AG04450 (cell line): ENCODE measurements at regions of chr17 and their contacts with region 1.

Region 1: GRCh38 chr17:51056813-51057510 is 63.7 kb downstream of the SPAG9 start:
- DNase-seq: peak; percentile 61
- H3K4me3 ChIP-seq: no peak overlapping the region
- H3K27ac ChIP-seq: peak overlapping the region; percentile 80
- H3K27me3 ChIP-seq: no peaks in the 10 kb centered on the region
- CTCF ChIP-seq: peak; percentile 70

Region 2: GRCh38 chr17:50440172-50440837 is 616.7 kb before region 1 on chr17:
- CTCF ChIA-PET with region 1: no interaction called
- POLR2A ChIA-PET with region 1: no interaction called
- DNase-seq: no peak
- H3K4me3 ChIP-seq: no peak overlapping the region
- H3K27ac ChIP-seq: no peak overlapping the region
- H3K27me3 ChIP-seq: no peaks in the 10 kb centered on the region
- CTCF ChIP-seq: no peak

Region 3: DNA sequence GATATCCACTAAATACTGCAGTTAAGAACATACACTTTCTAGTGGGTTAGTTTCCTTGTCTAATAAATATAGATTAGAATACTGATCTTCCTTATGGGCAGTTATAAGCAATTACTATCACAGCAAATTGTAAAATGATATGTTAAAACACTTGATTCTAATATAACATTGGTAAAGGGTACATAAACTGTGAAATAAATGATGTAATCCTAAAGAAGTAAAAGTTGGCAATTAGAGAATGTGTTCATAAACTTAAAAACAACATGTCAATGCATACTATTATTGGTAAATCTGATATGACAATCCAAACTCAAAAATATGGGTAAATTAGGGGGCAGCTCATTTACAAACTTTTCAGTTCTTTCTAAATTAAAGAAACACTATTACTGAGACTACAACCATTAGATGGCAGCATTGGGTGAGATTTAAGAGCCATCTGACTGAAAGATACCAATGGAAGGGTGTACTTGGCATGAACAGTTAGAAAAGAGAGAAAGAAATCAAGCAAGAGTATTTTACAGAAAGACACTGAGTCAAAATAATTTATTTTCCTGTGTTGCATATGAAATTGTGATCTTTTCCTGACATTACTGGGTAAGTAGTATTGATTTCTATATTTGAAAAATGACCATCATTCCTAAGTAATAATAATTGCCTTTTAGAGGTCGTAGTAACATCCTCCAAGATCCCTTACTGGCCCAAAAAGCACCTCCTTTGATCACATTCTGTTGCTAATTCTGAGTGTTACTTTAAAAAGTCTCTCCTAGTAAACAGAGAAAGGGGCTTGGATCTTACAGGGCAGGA is 55.9 kb before region 1 on chr17:
- CTCF ChIA-PET with region 1: interaction called, 119 read pairs
- POLR2A ChIA-PET with region 1: no interaction called
- DNase-seq: peak; percentile 45
- H3K4me3 ChIP-seq: no peak overlapping the region
- H3K27ac ChIP-seq: no peak overlapping the region
- H3K27me3 ChIP-seq: no peaks in the 10 kb centered on the region
- CTCF ChIP-seq: peak; percentile 54

Region 4: GRCh38 chr17:51006601-51007000 is 50.4 kb before region 1 on chr17:
- CTCF ChIA-PET with region 1: interaction called, 119 read pairs
- POLR2A ChIA-PET with region 1: no interaction called
- DNase-seq: no peak
- H3K4me3 ChIP-seq: no peak overlapping the region
- H3K27ac ChIP-seq: no peak overlapping the region
- H3K27me3 ChIP-seq: no peaks in the 10 kb centered on the region
- CTCF ChIP-seq: no peak

Region 5: DNA sequence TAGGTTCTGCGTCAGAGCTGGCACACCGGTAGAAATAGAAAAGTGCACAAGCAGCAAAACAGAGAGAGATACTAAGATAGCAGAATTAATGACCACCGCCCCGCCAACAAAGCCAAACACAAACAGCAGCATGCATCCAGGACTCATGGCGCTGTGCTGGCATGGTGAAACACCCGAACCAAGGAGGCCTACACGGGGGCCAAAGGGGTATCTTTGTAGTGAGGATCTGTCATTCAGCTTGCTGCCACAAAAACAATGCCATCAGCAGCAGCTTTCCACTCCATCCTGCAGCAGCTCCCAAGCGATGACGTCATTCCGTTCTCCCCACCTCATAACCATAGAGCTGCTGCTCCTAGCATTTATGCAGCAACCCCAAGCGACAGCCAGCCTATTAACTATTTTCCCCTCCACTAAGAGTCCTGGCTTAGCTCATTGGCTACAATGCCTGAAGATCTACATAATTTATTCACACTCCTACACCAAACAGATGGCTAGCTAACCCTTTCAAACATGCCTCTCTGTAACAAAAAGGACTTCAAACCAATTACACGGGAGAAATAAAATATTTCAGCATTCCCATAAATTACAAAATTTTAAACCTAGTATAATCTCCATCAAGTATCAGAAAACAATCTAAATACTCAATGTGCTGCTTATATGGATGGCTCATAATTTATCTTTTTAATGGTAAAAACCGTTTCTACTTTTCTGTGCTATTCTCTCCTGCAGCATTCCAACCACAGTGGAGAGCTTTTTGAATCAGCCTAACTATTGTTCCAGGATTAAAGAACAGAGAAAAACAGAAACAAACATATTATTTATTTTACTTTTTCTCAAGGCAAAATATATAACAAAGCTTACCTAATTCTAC is 10.2 kb before region 1 on chr17:
- CTCF ChIA-PET with region 1: interaction called, 90 read pairs
- POLR2A ChIA-PET with region 1: interaction called, 5 read pairs
- DNase-seq: peak; percentile 44
- H3K4me3 ChIP-seq: peak overlapping the region; percentile 35
- H3K27ac ChIP-seq: peak overlapping the region; percentile 47
- H3K27me3 ChIP-seq: no peaks in the 10 kb centered on the region
- CTCF ChIP-seq: no peak

Region 6: GRCh38 chr17:51097708-51098446 is 40.9 kb after region 1 on chr17:
- CTCF ChIA-PET with region 1: no interaction called
- POLR2A ChIA-PET with region 1: interaction called, 10 read pairs
- DNase-seq: no peak
- H3K4me3 ChIP-seq: no peak overlapping the region
- H3K27ac ChIP-seq: no peak overlapping the region
- H3K27me3 ChIP-seq: no peaks in the 10 kb centered on the region
- CTCF ChIP-seq: no peak

Region 7: DNA sequence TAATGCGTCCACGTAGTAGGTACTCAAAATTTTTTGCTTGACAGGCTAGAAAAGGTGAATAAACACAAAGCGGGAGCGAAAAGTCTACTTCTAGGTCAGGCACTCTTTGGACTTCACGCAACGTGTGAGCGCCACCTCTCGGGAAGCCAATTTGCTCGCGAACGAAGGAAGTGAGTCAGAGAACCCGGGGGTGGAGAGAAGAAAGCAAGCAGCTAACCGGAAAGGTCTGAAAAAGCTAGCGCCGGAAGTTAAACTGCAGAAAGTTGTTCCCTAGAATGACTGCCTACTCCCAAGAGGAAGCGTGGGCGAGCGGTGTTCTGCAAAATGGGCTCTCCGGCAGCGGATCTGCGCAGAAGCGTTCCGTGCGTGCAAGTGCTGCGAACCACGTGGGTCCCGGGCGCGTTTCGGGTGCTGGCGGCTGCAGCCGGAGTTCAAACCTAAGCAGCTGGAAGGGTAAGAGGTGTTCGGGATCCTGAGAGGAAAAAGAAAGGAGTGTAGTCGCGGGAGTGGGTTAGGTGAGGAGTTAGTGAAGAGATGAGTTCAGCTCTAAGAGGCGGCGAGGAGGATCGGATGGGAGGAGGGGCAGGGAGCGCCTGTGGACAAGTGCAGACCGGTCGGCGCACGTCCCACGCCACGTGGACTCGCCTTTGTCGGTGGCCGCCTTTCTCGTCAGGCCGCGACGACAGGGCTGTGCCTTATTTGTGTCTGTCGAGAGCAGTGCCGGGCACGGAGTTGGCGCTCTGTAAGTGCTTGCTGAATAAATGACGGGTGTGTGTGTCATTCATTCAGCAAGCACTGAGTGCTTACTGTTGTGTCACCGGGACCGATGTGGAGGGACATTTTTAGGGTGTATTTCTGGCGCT is 96.5 kb after region 1 on chr17 and contains the start of gene NME1:
- CTCF ChIA-PET with region 1: interaction called, 19 read pairs
- POLR2A ChIA-PET with region 1: no interaction called
- DNase-seq: peak; percentile 99
- H3K4me3 ChIP-seq: peak within 1 kb of the TSS; percentile 92
- H3K27ac ChIP-seq: peak within 1 kb of the TSS; percentile 65
- H3K27me3 ChIP-seq: no peaks in the 10 kb centered on the region
- CTCF ChIP-seq: peak; percentile 86
- polyA plus RNA-seq, gene NME1: 271 and 350 TPM in 2 replicates